A549 (cell line): ENCODE measurements at regions of chr14 and their contacts with region 1.

Region 1: GRCh38 chr14:50532502-50533240 is at the start of gene MAP4K5:
- DNase-seq: peak; percentile 79 to 93
- ATAC-seq: peak; percentile 96
- H3K4me3 ChIP-seq: peak within 1 kb of the TSS; percentile 83
- H3K27ac ChIP-seq: peak within 1 kb of the TSS; percentile 94 to 99
- H3K4me1 ChIP-seq: peaks cover 38% of the 10 kb centered on the region
- CTCF ChIP-seq: peak; percentile 96
- EP300 ChIP-seq: no peak
- POLR2A ChIP-seq: peak; percentile 53
- RAD21 ChIP-seq: peak; percentile 94 to 99
- polyA plus RNA-seq, gene MAP4K5: 18.7 and 20.0 TPM in 2 replicates

Region 2: DNA sequence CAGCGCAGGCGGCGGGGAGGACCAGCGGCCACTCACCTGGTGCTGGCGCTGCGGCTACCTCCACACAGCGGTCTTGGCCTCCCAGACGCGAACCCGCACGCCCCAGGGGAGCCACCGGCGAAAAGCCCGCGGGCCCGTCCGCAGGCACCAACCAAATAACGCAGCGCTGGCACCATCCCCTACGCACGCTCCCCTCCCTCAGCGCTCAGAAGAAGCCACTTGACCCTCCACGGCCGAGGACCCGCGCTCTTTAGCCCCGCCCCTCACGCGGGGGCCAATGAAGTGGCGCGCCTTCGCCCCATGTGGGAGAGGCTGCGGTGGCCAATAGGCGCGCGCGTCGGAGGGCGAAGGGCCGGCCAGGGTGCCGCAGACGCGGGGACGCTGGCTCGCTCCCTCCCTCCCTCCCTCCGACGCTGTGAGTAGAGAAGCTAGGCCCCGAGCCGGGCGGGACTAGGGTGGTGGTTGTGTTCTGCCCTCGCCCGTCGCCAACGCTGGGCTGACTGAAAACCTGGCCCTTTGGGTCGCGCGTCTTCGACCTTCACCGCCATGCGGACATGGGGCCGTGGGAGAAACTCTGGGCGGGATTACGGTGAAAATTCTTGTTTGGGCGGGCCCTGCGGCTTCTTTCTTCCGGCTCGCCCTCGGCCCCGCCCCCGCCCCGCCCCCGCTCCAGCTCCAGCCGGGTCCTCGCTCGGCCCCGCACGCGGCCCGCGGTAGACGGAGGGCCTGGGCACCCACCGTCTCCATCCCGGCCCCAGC is 220.5 kb before region 1 on chr14 and contains the starts of genes DMAC2L and L2HGDH:
- CTCF ChIA-PET with region 1: interaction called, 5 read pairs
- POLR2A ChIA-PET with region 1: interaction called, 11 read pairs
- DNase-seq: peak; percentile 95 to 97
- ATAC-seq: peak; percentile 95 to 97
- H3K4me3 ChIP-seq: peak within 1 kb of the TSS; percentile 56
- H3K27ac ChIP-seq: peak within 1 kb of the TSS; percentile 91 to 96
- H3K4me1 ChIP-seq: peaks cover 22% of the 10 kb centered on the region
- CTCF ChIP-seq: no peak; the same call in 2 of the 3 replicates
- EP300 ChIP-seq: no peak
- POLR2A ChIP-seq: peak; percentile 76
- RAD21 ChIP-seq: peak; percentile 13 to 14; a peak in 1 of 5 replicates
- polyA plus RNA-seq, gene DMAC2L: 15.2 and 24.6 TPM in 2 replicates
- polyA plus RNA-seq, gene L2HGDH: 12.6 and 14.5 TPM in 2 replicates

Region 3: DNA sequence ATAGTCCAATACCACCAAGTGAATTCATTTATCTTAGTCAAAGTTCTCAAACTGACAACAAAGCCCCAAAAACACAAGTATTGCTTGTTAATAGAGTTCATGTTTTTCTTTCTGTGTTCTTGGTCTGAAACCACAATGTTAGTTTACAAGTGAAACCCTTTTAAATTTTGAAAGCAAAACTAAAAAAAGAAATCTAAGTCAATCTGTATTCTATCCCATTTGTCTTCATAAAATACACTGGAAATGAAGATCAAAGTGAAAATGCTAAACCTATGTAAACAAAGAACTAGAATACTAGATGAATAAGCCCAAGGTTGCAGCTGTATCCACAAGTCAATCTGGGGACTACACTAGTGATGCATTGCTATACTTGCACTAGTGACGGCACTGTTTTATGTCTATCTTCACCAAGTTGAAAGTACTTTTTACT is 10.7 kb before region 1 on chr14:
- CTCF ChIA-PET with region 1: interaction called, 10 read pairs
- POLR2A ChIA-PET with region 1: no interaction called
- DNase-seq: no peak
- ATAC-seq: peak in 1 of 2 experiments; percentile 43; a peak in 1 of 6 replicates
- H3K4me3 ChIP-seq: no peak overlapping the region
- H3K27ac ChIP-seq: no peak overlapping the region
- H3K4me1 ChIP-seq: peaks cover 26% of the 10 kb centered on the region
- CTCF ChIP-seq: no peak
- EP300 ChIP-seq: no peak
- POLR2A ChIP-seq: no peak
- RAD21 ChIP-seq: no peak